ENCODE measurements at regions of chr14 and their contacts with region 1.

Region 1: DNA sequence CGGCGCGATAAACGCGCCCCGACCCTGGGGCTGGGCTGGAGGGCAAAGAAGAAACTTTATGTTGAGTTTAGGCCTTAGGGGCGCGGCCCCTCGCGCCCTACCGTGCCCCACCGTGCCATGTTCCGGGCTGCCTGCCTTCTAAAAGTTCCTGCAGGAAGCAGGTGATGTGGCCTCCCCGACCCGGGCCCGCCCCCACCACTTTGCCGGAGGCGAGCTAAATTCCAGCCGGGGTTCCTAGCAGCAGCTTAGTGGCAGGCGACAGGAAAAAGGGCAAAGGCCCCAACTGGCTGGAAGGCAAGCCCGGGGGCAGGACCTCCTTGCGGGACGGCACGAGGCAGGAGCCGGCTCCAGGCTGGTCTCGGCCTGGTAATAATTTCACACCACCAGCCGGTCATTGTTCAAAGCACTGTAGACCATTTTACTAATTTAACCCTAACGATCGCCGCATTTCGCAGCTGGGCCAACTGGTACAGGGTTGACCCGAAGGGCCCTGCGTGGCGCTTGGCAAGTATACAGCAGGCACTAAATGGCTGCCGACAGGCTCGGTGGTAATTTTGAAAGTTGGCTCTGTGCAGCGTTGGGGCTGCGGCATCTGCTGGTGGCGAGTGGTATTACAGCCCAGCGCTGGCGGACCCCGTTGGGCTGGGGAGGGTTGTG is 895 bp upstream of the CCDC88C start:
- DNase-seq: peak; percentile 45 to 69
- H3K4me3 ChIP-seq: peak overlapping the region; percentile 15 to 38
- H3K27ac ChIP-seq: peak overlapping the region in 1 of 2 donors; percentile 11
- H3K4me1 ChIP-seq: no peaks in the 10 kb centered on the region
- H3K27me3 ChIP-seq: no peaks in the 10 kb centered on the region
- CTCF ChIP-seq: peak; percentile 87 to 93 (median 92)
- POLR2A ChIP-seq: peak in 1 of 2 donors; percentile 13

Region 2: GRCh38 chr14:91264151-91265150 is 154.1 kb before region 1 on chr14:
- intact Hi-C with region 1: no loop called
- DNase-seq: no peak
- H3K4me3 ChIP-seq: peak overlapping the region; percentile 9 to 21
- H3K27ac ChIP-seq: no peak overlapping the region
- H3K4me1 ChIP-seq: no peaks in the 10 kb centered on the region
- H3K27me3 ChIP-seq: no peaks in the 10 kb centered on the region
- CTCF ChIP-seq: no peak
- POLR2A ChIP-seq: no peak

Region 3: GRCh38 chr14:91323671-91324605 is 94.6 kb before region 1 on chr14:
- intact Hi-C with region 1: loop called (anchors 5 kb)
- DNase-seq: peak; percentile 88 to 91
- H3K4me3 ChIP-seq: peak overlapping the region; percentile 23 to 44
- H3K27ac ChIP-seq: peak overlapping the region; percentile 58 to 86
- H3K4me1 ChIP-seq: peaks cover 0 to 5% of the 10 kb centered on the region in 2 donors
- H3K27me3 ChIP-seq: no peaks in the 10 kb centered on the region
- CTCF ChIP-seq: peak; percentile 87 to 94 (median 90)
- POLR2A ChIP-seq: no peak

Region 4: DNA sequence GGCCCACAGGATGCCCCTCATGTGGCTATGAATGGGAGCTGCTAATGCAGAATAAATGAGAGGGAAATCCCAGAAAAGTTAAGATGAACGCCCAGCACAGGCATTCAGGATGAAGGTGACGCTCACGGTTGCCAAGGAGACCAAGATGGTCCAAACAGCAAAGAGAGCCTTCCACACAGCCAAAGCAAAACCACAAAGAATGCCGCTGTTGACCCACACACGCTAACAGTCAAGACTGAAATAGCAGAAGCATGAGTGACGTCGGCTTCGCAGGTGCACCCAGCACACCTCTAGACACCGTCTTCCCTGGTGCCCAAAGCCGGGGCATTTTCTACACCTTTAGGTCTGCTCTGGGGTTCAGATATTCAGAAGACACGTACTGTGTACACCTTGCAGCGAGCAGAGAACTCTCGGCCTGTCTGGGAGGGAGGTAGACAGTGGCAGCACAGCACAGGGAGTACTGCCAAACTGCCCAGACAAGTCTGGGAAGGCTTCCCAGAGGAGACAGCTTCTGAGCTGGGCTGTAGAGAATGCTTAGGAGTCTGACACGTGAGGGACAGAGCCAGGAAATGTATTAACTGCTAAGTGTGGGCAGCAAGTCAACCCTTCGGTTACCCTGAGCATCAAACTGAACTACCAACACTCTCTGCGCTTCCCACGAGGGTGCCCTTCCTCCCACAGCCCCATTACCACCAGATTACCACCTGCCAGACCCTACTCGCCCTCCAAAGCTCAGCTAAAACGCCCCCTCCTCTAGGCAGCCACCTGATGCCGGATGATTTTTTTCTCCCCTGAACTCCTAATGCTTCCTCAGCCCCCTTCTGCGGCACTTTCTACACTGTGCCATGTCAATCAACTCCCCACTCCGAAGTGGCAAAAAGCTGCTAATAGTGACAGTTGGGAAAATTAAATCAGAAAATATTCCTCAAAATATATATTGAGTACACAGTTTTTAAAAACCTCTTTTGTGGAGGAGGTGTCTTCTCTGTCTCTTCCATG is 51.0 kb before region 1 on chr14:
- intact Hi-C with region 1: no loop called
- DNase-seq: no peak
- H3K4me3 ChIP-seq: no peak overlapping the region
- H3K27ac ChIP-seq: peak overlapping the region in 1 of 2 donors; percentile 41
- H3K4me1 ChIP-seq: no peaks in the 10 kb centered on the region
- H3K27me3 ChIP-seq: no peaks in the 10 kb centered on the region
- CTCF ChIP-seq: no peak
- POLR2A ChIP-seq: no peak

Measured in uterus (tissue), 4 donors.